Activated CD4-positive, alpha-beta T cell treated with anti-CD3 and anti-CD28 coated beads for 36 hours (primary cell): ENCODE measurements at regions of chr3 and their contacts with region 1.

Region 1: GRCh38 chr3:136861890-136862616 is at the start of gene NCK1:
- DNase-seq: peak; percentile 99
- ATAC-seq: peak; percentile 99
- H3K4me3 Mint-ChIP-seq: peak within 1 kb of the TSS; percentile 96
- H3K27ac Mint-ChIP-seq: peak within 1 kb of the TSS; percentile 98
- H3K4me1 Mint-ChIP-seq: peaks cover 41% of the 10 kb centered on the region
- H3K27me3 Mint-ChIP-seq: no peaks in the 10 kb centered on the region
- total RNA-seq, gene NCK1: 30.4 to 31.9 TPM

Region 2: GRCh38 chr3:136196401-136197158 is 665.5 kb before region 1 on chr3:
- CTCF ChIA-PET with region 1: no interaction called
- POLR2A ChIA-PET with region 1: interaction called, 5 read pairs
- intact Hi-C with region 1: loop called in 1 of 2 experiments (anchors 1 kb)
- DNase-seq: peak; percentile 100
- ATAC-seq: peak; percentile 82
- H3K4me3 Mint-ChIP-seq: peak overlapping the region; percentile 100
- H3K27ac Mint-ChIP-seq: peak overlapping the region; percentile 98
- H3K4me1 Mint-ChIP-seq: peaks cover 25% of the 10 kb centered on the region
- H3K27me3 Mint-ChIP-seq: no peaks in the 10 kb centered on the region

Region 3: DNA sequence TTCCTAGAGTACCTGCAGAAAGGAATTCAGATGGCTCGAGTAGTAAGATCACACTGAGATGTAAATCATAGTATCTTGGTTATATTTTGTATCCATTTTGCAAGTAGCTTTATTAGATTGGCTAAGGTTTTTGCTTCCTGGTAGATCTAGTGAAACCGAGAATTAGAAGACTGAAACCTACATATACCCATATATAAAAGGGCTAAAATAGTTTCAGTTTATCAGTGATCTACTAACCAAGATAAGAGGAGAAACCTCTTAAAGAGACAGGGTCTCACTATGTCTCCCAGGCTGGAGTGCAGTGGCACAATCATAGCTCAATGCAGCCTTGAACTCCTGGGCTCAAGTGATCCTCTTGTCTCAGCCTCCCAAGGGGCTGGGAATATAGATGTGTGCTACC is 476.6 kb before region 1 on chr3:
- CTCF ChIA-PET with region 1: no interaction called
- POLR2A ChIA-PET with region 1: no interaction called
- intact Hi-C with region 1: no loop called
- DNase-seq: no peak
- ATAC-seq: peak; percentile 53
- H3K4me3 Mint-ChIP-seq: no peak overlapping the region
- H3K27ac Mint-ChIP-seq: no peak overlapping the region
- H3K4me1 Mint-ChIP-seq: peaks cover 3% of the 10 kb centered on the region
- H3K27me3 Mint-ChIP-seq: no peaks in the 10 kb centered on the region

Region 4: GRCh38 chr3:136818769-136819391 is 43.2 kb before region 1 on chr3 and contains the start of gene SLC35G2:
- CTCF ChIA-PET with region 1: interaction called, 6 read pairs
- POLR2A ChIA-PET with region 1: no interaction called
- intact Hi-C with region 1: loop called (anchors 1 to 2 kb)
- DNase-seq: peak; percentile 62
- ATAC-seq: peak; percentile 47
- H3K4me3 Mint-ChIP-seq: peak within 1 kb of the TSS; percentile 72
- H3K27ac Mint-ChIP-seq: peak within 1 kb of the TSS; percentile 55
- H3K4me1 Mint-ChIP-seq: peaks cover 19% of the 10 kb centered on the region
- H3K27me3 Mint-ChIP-seq: peaks cover 29% of the 10 kb centered on the region
- total RNA-seq, gene SLC35G2: 1.7 to 2.0 TPM

Region 5: GRCh38 chr3:136919799-136920580 is 57.9 kb after region 1 on chr3:
- CTCF ChIA-PET with region 1: interaction called, 3 read pairs
- POLR2A ChIA-PET with region 1: no interaction called
- intact Hi-C with region 1: loop called (anchors 5 kb)
- DNase-seq: no peak
- ATAC-seq: peak; percentile 83
- H3K4me3 Mint-ChIP-seq: no peak overlapping the region
- H3K27ac Mint-ChIP-seq: peak overlapping the region; percentile 57
- H3K4me1 Mint-ChIP-seq: peaks cover 78% of the 10 kb centered on the region
- H3K27me3 Mint-ChIP-seq: no peaks in the 10 kb centered on the region

Region 6: GRCh38 chr3:137013955-137014688 is 152.1 kb after region 1 on chr3:
- CTCF ChIA-PET with region 1: interaction called, 9 read pairs
- POLR2A ChIA-PET with region 1: no interaction called
- intact Hi-C with region 1: loop called (anchors 2 kb)
- DNase-seq: peak; percentile 90
- ATAC-seq: peak; percentile 89
- H3K4me3 Mint-ChIP-seq: peak overlapping the region; percentile 67
- H3K27ac Mint-ChIP-seq: peak overlapping the region; percentile 57
- H3K4me1 Mint-ChIP-seq: peaks cover 7% of the 10 kb centered on the region
- H3K27me3 Mint-ChIP-seq: no peaks in the 10 kb centered on the region

Region 7: DNA sequence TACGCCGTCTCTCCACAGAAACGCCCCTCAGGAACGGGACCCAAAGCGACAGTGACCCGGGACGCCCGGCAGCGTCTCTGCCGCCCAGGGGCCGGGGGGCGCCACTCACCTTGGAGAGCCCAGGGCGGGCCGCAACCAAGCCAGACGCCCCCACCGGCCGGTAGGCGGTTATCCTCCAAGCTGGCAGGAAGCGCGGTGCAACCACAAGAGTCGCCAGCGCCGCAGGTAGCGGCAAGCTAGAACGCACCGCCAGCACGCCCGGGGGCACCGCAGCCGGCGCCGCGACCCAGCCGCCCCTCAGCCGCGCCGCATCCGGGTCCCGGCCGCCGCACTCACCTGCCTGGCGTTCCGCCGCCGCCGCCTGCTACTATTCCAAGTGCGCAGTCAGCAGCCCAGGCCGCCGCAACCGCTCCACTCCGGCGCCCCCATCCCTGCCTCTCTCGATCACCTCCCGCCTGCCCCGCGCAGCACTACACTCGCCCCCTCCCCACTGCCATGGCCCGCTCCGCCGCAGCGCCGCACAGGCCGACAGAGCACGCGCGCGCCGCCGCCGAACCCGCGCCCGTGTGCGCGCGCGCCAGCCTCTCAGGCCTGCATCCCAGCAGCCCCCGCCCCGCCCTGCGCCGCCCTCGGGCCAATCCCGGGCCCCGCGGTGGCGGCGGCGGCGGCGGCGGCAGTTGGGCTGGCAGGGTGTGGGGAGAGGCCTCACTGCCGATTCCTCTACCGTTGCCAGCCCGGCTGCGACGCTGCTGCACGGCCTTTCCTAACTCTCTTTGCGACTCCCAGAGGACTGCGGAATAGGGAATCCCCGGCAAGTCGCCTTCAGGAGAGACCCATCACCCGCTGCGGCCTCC is 1972.5 kb after region 1 on chr3 and contains the start of gene PIK3CB:
- CTCF ChIA-PET with region 1: no interaction called
- POLR2A ChIA-PET with region 1: no interaction called
- intact Hi-C with region 1: loop called in 1 of 2 experiments (anchors 5 kb)
- DNase-seq: peak; percentile 93
- ATAC-seq: peak; percentile 91
- H3K4me3 Mint-ChIP-seq: peak within 1 kb of the TSS; percentile 94
- H3K27ac Mint-ChIP-seq: peak within 1 kb of the TSS; percentile 100
- H3K4me1 Mint-ChIP-seq: peaks cover 32% of the 10 kb centered on the region
- H3K27me3 Mint-ChIP-seq: no peaks in the 10 kb centered on the region
- total RNA-seq, gene PIK3CB: 16.2 to 19.1 TPM